Breast epithelium (tissue), 4 donors: ENCODE measurements at regions of chr6 and their contacts with region 1.

Region 1: DNA sequence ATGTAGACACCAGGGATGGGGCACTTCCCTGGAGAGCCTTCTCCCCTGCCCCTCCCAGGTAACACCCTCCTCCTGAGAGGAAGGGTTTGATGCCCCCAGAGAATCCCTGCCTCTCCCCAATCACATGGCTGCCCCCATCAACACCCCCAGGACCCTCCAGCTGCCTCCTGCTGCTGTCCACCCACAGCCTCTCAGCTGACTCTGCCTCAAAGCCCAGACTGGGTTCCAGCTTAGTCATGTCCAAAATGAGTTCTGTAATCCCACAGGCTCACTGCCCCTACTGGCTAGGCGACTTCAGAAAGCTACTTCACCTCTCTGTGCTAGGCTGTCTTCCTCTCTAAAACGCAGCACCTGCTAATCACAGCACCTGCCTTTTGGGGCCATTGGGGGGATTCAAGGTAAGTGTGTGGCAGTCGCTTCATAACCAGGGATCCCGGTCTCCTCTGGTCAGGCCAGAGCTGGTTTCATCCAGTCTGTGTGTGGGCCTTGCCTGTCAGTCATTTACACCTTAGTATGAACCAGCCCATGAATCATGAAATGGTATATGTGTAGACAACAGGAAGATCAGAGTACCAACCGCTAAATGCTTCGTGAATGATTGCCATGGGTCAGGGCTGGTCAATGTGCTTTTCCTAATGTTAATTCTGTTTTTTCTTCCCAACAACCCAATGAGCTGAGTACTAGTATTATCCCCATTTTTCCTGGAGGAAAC is 40.4 kb downstream of the TFEB start:
- DNase-seq: no peak
- H3K4me3 ChIP-seq: no peak overlapping the region
- H3K27ac ChIP-seq: peak overlapping the region in 1 of 2 donors; percentile 5
- H3K4me1 ChIP-seq: peaks cover 0 to 15% of the 10 kb centered on the region in 2 donors
- H3K27me3 ChIP-seq: no peaks in the 10 kb centered on the region
- CTCF ChIP-seq: no peak
- POLR2A ChIP-seq: no peak

Region 2: DNA sequence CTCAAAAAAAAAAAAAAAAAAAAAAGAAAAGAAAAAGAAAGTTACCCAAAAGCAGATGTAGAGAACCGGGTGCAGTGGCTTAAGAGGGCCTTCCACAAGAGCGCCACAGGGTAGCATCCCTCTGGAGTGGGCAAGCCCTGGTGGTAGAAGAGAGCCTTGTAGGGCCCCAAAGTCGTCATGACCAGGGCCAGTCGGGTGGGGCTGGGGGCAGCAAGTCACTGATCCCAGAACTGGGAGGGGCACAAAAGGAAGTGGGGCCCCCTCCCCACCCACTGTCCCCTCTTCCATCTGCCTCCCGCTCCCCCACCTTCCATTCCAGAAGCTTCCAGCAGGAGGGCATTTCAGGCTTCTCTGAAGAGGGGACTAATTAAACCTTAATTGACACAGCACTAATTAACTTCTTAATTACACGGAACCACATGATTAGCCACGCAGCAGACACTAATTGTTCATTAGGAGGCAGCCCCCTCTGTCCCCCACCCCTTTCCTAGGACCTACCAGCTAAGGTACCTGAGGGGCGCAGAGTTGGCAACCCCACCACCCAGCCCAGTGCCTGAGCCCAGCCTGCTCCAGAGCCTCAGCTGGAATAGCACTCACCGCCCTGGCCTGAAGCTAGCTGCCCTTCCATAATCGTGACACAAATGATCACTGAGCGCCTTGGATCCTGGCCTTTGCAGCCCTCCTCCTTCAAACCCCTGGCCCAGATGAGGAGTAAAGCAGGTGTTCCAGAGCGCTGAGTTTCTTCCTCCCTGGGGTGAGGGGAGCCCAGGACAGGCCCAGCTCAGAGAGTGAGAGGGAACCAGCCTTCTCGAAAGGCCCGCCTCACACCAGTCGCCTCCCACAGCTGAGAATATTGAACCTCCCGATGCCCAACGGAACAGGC is 21.9 kb before region 1 on chr6:
- intact Hi-C with region 1: loop called (anchors 1 kb)
- DNase-seq: no peak
- H3K4me3 ChIP-seq: no peak overlapping the region
- H3K27ac ChIP-seq: no peak overlapping the region
- H3K4me1 ChIP-seq: no peaks in the 10 kb centered on the region
- H3K27me3 ChIP-seq: no peaks in the 10 kb centered on the region
- CTCF ChIP-seq: no peak
- POLR2A ChIP-seq: no peak